Mammary epithelial cell (primary cell): ENCODE measurements at regions of chrX and their contacts with region 1.

Region 1: GRCh38 chrX:16826207-16826606 is 39.9 kb downstream of the TXLNG start:
- DNase-seq: peak; percentile 50
- H3K4me3 ChIP-seq: no peak overlapping the region
- H3K27ac ChIP-seq: peak overlapping the region; percentile 93
- H3K4me1 ChIP-seq: peaks cover 44% of the 10 kb centered on the region
- H3K27me3 ChIP-seq: no peaks in the 10 kb centered on the region
- CTCF ChIP-seq: peak; percentile 34 to 58

Region 2: DNA sequence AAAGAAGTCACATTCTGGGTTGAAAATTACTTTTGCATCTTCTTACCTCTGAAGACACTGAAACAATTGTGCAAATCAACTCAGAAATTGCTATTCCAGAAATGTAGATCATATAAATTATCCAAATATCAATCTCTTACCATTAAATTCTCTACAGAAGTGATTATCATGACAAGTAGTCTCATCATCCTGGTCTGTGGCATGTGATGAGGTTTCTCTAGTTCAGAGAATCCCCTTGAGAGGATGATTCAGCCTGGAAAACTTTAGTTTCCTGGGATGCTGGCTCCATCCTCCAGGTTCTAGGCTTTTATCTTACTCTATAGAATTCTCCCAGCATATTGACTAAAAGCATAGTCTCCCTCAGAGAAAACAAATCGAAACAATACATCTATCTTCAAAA is 252.4 kb before region 1 on chrX:
- CTCF ChIA-PET with region 1: no interaction called
- dilution Hi-C with region 1: no loop called
- in situ Hi-C with region 1: no loop called
- intact Hi-C with region 1: no loop called
- DNase-seq: peak; percentile 40
- H3K4me3 ChIP-seq: no peak overlapping the region
- H3K27ac ChIP-seq: no peak overlapping the region
- H3K4me1 ChIP-seq: peaks cover 8% of the 10 kb centered on the region
- H3K27me3 ChIP-seq: no peaks in the 10 kb centered on the region
- CTCF ChIP-seq: no peak

Region 3: DNA sequence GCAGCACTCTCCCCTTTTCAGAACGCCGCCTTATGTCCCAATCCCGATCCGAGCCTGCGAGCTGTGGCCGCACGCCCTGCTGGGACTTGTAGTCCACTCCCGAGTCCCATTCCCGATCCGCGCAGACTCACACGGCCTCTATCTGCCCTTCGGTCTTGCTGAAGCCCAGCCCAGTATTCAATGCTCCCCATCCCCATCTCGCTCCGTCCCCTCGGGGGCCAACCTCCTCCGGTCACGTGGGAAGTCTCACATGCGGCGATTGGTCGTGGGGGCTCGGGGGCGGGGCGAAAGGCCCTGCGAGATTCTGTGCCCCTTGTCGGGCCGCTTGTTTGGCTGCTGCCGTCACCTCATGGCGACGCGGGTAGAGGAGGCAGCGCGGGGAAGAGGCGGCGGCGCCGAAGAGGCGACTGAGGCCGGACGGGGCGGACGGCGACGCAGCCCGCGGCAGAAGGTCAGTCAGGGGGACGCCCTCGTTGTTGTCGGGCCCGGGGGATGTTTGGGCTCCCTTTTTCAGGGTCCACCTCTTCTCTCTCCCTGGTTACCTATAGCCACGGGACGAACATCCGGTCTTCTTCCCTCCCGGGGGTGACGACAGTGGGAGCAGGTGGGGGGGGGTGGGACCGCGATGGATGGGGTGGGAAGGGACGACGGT is 39.9 kb before region 1 on chrX and contains the start of gene TXLNG:
- CTCF ChIA-PET with region 1: no interaction called
- dilution Hi-C with region 1: no loop called
- in situ Hi-C with region 1: no loop called
- intact Hi-C with region 1: loop called (anchors 5 kb)
- DNase-seq: peak; percentile 100
- H3K4me3 ChIP-seq: peak within 1 kb of the TSS; percentile 77 to 93 (median 78)
- H3K27ac ChIP-seq: peak within 1 kb of the TSS; percentile 83
- H3K4me1 ChIP-seq: peaks cover 7% of the 10 kb centered on the region
- H3K27me3 ChIP-seq: no peaks in the 10 kb centered on the region
- CTCF ChIP-seq: no peak
- total RNA-seq, gene TXLNG: 13.2 to 28.3 TPM

Region 4: GRCh38 chrX:16882702-16883486 is 56.7 kb after region 1 on chrX:
- CTCF ChIA-PET with region 1: no interaction called
- dilution Hi-C with region 1: loop called (anchors 5 kb)
- in situ Hi-C with region 1: no loop called
- intact Hi-C with region 1: loop called (anchors 1 kb)
- DNase-seq: peak; percentile 66
- H3K4me3 ChIP-seq: peak overlapping the region; percentile 6 to 42 (median 29)
- H3K27ac ChIP-seq: peak overlapping the region; percentile 20
- H3K4me1 ChIP-seq: peaks cover 4% of the 10 kb centered on the region
- H3K27me3 ChIP-seq: no peaks in the 10 kb centered on the region
- CTCF ChIP-seq: peak; percentile 77 to 92

Region 5: DNA sequence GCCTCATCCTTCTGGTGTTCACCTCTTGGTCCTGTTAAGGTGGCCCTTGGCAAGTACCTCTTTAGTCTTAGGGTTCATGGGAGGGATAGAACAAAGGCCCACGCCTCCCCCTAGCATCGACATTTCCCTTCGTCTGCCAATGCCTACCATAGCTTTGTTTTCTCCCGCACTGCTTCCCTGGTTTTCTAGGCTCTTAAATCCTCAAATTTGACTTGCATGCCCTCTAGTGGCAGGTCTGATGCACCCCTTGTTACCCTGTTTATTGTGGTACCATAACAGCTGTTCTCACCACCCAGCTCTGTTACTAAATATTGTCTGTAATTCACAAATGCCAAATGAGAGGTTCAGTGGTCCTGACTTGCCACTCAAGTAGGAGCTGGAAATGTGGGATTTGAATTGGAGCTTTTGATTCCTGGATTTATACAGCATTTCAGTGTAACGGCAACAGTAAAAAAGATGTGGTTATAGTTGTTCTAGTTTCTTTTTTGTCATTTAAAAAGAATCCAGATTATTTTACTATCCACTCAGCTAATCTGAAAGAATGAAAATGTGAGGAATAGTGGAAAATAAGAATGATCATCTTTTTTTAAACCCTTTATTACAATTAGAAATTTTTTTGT is 220.4 kb after region 1 on chrX:
- CTCF ChIA-PET with region 1: interaction called, 9 read pairs
- dilution Hi-C with region 1: no loop called
- in situ Hi-C with region 1: no loop called
- intact Hi-C with region 1: loop called (anchors 1 kb)
- DNase-seq: peak; percentile 56
- H3K4me3 ChIP-seq: no peak overlapping the region
- H3K27ac ChIP-seq: no peak overlapping the region
- H3K4me1 ChIP-seq: no peaks in the 10 kb centered on the region
- H3K27me3 ChIP-seq: no peaks in the 10 kb centered on the region
- CTCF ChIP-seq: peak; percentile 93 to 97

Region 6: GRCh38 chrX:17174671-17175070 is 348.5 kb after region 1 on chrX:
- CTCF ChIA-PET with region 1: interaction called, 26 read pairs
- dilution Hi-C with region 1: no loop called
- in situ Hi-C with region 1: no loop called
- intact Hi-C with region 1: no loop called
- DNase-seq: no peak
- H3K4me3 ChIP-seq: no peak overlapping the region
- H3K27ac ChIP-seq: no peak overlapping the region
- H3K4me1 ChIP-seq: no peaks in the 10 kb centered on the region
- H3K27me3 ChIP-seq: peaks cover 4% of the 10 kb centered on the region
- CTCF ChIP-seq: no peak